Activated T-helper 1 cell treated with anti-CD3 and anti-CD28 coated beads, Interleukin-12 subunit alpha, Interleukin-12 subunit beta, Interleukin-2, Interleukin-4 antibody, amounts not matched to agents 30 ng/mL and 10 ng/mL and 1 ng/mL, durations not matched to agents 14 hours and 24 hours and 36 hours (primary cell): ENCODE measurements at regions of chr4 and their contacts with region 1.

Region 1: DNA sequence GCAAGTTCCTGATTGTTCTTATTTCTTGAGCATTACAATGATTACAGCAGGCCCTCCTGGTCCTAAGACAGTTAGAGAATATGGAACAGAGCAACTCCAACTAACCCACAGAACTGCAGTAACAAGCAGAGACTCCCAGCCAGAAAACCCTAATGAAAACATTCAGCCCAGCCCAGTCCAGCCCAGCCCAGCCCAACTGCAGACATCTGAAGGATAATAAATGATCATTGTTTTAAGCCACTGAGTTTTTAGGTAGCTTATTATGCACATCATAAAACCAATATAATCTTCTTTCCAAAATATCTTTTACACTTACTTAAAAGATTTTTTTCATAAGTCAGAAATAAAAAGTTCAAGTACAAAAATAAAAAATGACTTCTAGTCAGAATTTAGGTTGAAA is 51.3 kb downstream of the SPOCK3 start:
- DNase-seq: no peak
- H3K4me3 Mint-ChIP-seq: no peak overlapping the region
- H3K27ac Mint-ChIP-seq: no peak overlapping the region
- H3K4me1 Mint-ChIP-seq: no peaks in the 10 kb centered on the region
- H3K27me3 Mint-ChIP-seq: no peaks in the 10 kb centered on the region

Region 2: DNA sequence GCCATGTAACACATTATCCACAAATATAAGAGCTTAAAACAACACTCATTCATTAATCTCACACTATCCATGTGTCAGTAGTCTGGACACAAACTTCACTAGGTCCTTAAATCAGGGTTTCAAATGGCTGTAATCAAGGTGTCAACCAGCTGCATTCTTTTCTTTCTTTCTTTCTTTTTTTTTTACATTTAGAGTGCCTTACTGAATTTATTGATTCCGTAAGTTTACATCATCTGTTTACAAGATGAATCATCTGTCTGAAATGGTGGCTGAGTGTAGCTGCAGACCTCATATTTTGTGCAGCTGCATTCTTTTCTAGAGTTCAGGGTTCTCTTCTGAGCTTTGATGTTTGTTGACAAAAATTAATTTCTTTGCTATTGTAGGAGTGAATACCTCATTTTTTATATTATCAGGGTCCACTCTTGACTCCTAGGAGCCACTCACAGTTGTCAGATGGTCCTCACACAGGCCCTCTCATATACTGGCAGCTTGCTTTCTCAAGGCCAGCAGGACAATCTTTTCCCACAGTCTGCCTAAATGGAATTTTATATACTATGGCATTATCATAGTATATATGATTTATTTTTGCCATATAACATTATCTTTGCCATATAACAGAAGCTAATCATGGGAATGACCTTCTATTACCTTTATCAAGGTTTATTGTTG is 13.4 kb after region 1 on chr4:
- intact Hi-C with region 1: loop called (anchors 1 kb)
- DNase-seq: no peak
- H3K4me3 Mint-ChIP-seq: no peak overlapping the region
- H3K27ac Mint-ChIP-seq: no peak overlapping the region
- H3K4me1 Mint-ChIP-seq: no peaks in the 10 kb centered on the region
- H3K27me3 Mint-ChIP-seq: no peaks in the 10 kb centered on the region

Region 3: DNA sequence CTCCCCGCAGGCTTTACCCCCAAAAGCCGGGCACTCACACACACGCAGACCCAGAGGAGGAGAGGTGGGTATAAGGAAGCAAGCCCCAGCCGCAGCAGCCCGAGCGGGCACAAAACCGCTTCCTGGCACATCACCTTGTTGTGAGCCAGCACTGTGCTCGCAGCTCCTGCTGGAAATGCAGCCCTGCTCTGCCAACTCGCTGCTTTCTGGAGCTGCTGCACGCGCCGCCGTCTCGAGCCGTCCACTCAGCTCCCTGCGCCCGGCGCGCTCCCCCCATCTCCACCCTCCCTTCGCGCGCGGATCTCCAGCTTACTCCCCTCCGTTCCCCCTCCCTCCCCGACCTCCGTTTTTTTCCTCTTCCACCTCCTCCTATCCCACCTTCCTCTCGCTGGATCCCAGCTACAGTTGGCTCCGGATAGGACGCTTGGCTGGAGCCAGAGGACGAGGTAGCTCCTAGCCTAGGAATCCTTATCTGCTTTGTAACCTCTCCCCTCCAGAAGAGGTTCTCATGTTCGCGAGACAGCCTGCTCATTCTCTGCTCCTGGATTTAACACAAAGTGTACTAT is 51.4 kb after region 1 on chr4 and contains the start of gene SPOCK3:
- intact Hi-C with region 1: no loop called
- DNase-seq: no peak
- H3K4me3 Mint-ChIP-seq: peak within 1 kb of the TSS; percentile 69
- H3K27ac Mint-ChIP-seq: no peak within 1 kb of the TSS
- H3K4me1 Mint-ChIP-seq: peaks cover 9% of the 10 kb centered on the region
- H3K27me3 Mint-ChIP-seq: peaks cover 28% of the 10 kb centered on the region
- total RNA-seq, gene SPOCK3: not detected in 2 replicates